GM10248 (cell line): ENCODE measurements at regions of chr1 and their contacts with region 1.

Region 1: GRCh38 chr1:236759252-236759859 is 35.7 kb upstream of the MTR start:
- DNase-seq: peak; percentile 71
- CTCF ChIP-seq: peak; percentile 62

Region 2: GRCh38 chr1:236727521-236727920 is 31.8 kb before region 1 on chr1:
- CTCF ChIA-PET with region 1: interaction called, 10 read pairs
- POLR2A ChIA-PET with region 1: no interaction called
- DNase-seq: no peak
- CTCF ChIP-seq: no peak

Region 3: GRCh38 chr1:236748471-236748870 is 10.9 kb before region 1 on chr1:
- CTCF ChIA-PET with region 1: interaction called, 33 read pairs
- POLR2A ChIA-PET with region 1: no interaction called
- DNase-seq: no peak
- CTCF ChIP-seq: no peak

Region 4: DNA sequence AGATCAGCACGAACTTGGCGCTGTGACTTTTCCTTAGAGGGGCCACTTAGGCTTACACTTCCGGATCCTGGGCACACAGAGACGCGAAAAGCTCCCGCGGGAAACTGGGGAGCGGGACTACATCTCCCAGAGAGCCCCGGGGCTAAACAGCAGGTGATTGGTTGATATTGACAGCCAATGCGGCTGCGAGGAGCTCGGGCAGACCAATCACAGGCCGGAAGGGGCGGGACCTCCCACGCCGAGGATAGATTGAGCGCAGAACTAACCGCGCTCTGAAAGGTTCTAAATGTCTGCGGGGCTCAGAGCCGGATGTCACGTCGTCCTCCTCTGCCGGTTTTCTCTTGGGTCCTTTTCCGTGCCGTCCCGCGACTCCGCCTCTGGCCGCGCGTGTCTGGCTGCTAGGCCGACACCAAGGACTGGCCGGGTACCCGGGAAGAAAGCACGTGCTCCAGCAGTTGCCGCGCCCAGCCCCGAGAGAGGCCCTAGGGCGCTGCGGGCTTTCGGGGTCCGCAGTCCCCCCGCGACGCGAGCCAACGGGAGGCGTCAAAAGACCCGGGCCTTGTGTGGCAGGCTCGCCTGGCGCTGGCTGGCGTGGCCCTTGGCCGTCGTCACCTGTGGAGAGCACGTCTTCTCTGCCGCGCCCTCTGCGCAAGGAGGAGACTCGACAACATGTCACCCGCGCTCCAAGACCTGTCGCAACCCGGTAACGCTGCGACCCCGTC is 35.8 kb after region 1 on chr1 and contains the start of gene MTR:
- CTCF ChIA-PET with region 1: interaction called, 13 read pairs
- POLR2A ChIA-PET with region 1: no interaction called
- DNase-seq: peak; percentile 99
- CTCF ChIP-seq: no peak

Region 5: DNA sequence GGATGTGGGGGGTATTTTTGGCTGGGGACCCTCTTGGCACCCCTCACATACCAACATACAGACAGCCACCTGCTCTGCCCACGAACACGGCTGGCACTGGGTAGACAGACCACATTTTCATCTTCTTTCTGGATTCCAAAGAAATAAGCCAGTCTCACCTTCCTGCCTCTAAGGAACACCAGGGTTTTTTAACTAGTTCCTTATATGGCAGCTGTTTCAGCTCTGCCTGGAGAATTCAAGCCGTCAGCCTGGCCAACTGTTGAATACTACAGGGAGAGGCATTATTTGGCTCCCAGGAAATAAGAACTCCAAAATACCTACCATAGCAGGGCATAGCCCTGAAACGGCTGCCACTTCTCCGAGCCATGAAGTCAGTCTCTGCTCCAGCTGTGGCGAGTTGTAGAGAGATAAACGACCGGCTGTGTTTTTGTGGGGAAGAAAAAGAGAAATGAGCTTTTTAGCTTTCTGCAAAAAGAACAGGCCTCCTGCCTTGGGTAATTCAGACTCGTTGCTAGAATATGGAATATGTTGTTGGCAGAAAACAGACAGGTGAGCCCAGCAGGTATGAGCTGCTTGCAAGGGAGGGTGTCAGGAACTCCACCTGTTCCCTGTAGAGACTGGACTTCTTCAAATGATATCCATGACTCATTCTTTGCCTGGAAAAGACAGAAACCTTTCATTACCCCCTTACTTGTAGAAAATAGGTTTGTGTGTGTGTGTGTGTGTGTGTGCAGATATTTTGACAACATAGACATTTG is 193.1 kb after region 1 on chr1:
- CTCF ChIA-PET with region 1: no interaction called
- POLR2A ChIA-PET with region 1: no interaction called
- DNase-seq: no peak
- CTCF ChIP-seq: no peak

Region 6: GRCh38 chr1:237386362-237387143 is 627.2 kb after region 1 on chr1:
- CTCF ChIA-PET with region 1: interaction called, 37 read pairs
- POLR2A ChIA-PET with region 1: no interaction called
- DNase-seq: peak; percentile 36
- CTCF ChIP-seq: peak; percentile 59